Mammary epithelial cell (primary cell): ENCODE measurements at regions of chr3 and their contacts with region 1.

Region 1: GRCh38 chr3:184777336-184778004 is 34.5 kb upstream of the VPS8 start:
- DNase-seq: peak; percentile 80
- H3K4me3 ChIP-seq: no peak overlapping the region
- H3K27ac ChIP-seq: no peak overlapping the region
- H3K4me1 ChIP-seq: peaks cover 18% of the 10 kb centered on the region
- H3K27me3 ChIP-seq: no peaks in the 10 kb centered on the region
- CTCF ChIP-seq: peak; percentile 74

Region 2: GRCh38 chr3:184748219-184749135 is 29.0 kb before region 1 on chr3:
- CTCF ChIA-PET with region 1: no interaction called
- dilution Hi-C with region 1: no loop called
- in situ Hi-C with region 1: no loop called
- intact Hi-C with region 1: loop called (anchors 1 kb)
- DNase-seq: peak; percentile 83
- H3K4me3 ChIP-seq: no peak overlapping the region
- H3K27ac ChIP-seq: peak overlapping the region; percentile 54
- H3K4me1 ChIP-seq: peaks cover 8% of the 10 kb centered on the region
- H3K27me3 ChIP-seq: no peaks in the 10 kb centered on the region
- CTCF ChIP-seq: peak; percentile 74 to 93

Region 3: GRCh38 chr3:184795522-184796190 is 18.2 kb after region 1 on chr3:
- CTCF ChIA-PET with region 1: no interaction called
- dilution Hi-C with region 1: no loop called
- in situ Hi-C with region 1: no loop called
- intact Hi-C with region 1: no loop called
- DNase-seq: no peak
- H3K4me3 ChIP-seq: no peak overlapping the region
- H3K27ac ChIP-seq: no peak overlapping the region
- H3K4me1 ChIP-seq: no peaks in the 10 kb centered on the region
- H3K27me3 ChIP-seq: peaks cover 3% of the 10 kb centered on the region
- CTCF ChIP-seq: no peak

Region 4: DNA sequence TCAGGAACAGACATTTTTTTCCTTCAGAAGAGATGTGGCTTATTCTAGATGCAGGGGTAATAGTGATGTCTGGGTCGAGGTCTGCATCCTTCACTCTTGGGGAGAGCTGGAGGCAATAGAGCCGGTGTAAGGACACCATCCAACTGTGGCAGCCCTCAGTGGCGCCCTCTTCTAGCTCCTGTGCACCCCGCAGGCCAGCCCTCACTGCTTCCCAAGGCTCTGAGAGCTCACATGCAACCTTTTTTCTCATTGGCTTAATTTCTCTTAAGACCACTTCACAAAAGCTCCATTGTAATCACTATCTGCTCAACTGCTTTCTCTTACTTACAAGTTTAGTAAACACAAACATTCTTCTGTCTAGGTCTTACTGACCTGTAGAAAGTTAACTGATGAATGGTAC is 30.6 kb after region 1 on chr3:
- CTCF ChIA-PET with region 1: no interaction called
- dilution Hi-C with region 1: no loop called
- in situ Hi-C with region 1: no loop called
- intact Hi-C with region 1: loop called (anchors 1 kb)
- DNase-seq: no peak
- H3K4me3 ChIP-seq: no peak overlapping the region
- H3K27ac ChIP-seq: no peak overlapping the region
- H3K4me1 ChIP-seq: peaks cover 5% of the 10 kb centered on the region
- H3K27me3 ChIP-seq: no peaks in the 10 kb centered on the region
- CTCF ChIP-seq: peak in 1 of 2 donors; percentile 19